Calu3 (cell line): ENCODE measurements at regions of chr5 and their contacts with region 1.

Region 1: DNA sequence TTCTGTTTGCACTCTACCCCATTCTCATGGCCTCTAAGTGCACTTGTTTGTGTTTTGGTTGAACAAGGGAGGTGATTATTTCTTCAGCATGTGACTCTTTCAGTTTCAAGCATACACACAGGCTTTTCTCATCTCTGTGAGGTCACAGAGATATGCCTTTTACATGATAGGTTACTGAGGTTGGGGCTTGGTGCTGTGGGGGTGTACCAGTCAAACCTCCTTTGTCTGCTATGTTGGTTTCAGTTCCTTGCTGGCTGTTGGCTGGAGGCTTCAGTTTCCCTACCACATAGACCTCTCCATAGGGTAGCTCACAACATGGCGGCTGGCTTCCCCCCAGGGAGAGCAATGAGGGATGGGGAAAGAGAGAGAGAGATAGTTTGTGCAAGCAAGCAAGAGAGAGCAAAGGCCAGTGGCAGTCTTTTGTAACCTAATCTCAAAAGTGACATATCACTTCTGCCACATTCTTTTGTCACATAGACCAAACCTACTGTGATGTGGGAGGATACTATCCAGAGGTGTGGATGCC is 96.7 kb upstream of the SEMA6A start:
- DNase-seq: no peak
- H3K4me3 Mint-ChIP-seq: peak overlapping the region; percentile 39
- H3K27ac Mint-ChIP-seq: peak overlapping the region; percentile 95
- H3K4me1 Mint-ChIP-seq: peaks cover 93% of the 10 kb centered on the region
- H3K27me3 Mint-ChIP-seq: no peaks in the 10 kb centered on the region
- CTCF ChIP-seq: no peak

Region 2: DNA sequence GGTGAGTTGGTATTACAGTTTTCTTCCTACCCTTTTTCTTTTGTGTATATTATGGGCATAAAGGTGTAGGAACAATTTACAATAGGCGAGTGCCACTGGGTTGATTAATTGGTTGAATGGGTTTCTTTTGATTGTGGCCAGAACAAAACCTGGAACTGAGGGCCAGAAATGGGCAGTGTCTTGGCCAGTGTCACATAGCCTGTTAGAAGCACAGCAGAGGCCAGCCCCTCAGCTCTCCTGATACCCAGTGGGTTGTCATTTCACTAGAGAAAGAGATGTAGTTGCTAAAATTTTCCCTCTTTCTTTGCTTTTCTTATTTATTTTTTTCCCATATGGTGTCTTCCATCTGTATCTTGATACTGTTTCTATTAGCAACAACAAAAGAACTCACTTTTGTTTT is 57.8 kb before region 1 on chr5:
- CTCF ChIA-PET with region 1: interaction called, 4 read pairs
- intact Hi-C with region 1: loop called (anchors 2 kb)
- DNase-seq: no peak
- H3K4me3 Mint-ChIP-seq: peak overlapping the region; percentile 52
- H3K27ac Mint-ChIP-seq: peak overlapping the region; percentile 96
- H3K4me1 Mint-ChIP-seq: peaks cover 42% of the 10 kb centered on the region
- H3K27me3 Mint-ChIP-seq: no peaks in the 10 kb centered on the region
- CTCF ChIP-seq: no peak

Region 3: DNA sequence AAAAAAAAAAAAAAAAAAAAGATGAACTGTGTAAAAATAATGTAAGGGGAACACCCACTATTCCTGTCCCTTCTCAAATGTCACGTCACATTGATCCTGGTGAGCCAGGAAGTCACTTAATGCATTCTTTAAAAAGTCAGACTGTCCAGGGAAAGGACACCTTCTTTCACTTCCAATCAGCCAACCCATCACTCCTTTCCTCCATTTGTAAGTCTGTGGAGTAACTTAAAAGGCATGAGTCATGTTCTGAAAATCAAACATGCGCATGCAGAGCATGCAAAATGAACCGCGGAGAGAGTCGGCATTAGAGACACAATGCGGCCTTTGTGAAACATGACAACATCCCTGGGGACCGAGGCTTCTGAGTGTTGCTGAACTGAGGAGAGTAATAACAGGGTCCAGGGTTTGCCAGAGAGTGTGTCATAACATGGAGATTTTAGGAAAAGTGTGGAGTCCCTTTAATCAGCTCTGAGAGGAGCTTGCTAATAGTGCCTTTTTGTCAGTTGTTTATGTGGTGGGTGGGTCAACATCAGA is 19.0 kb before region 1 on chr5:
- CTCF ChIA-PET with region 1: interaction called, 5 read pairs
- intact Hi-C with region 1: loop called (anchors 2 kb)
- DNase-seq: peak; percentile 79
- H3K4me3 Mint-ChIP-seq: peak overlapping the region; percentile 46
- H3K27ac Mint-ChIP-seq: peak overlapping the region; percentile 73
- H3K4me1 Mint-ChIP-seq: peaks cover 22% of the 10 kb centered on the region
- H3K27me3 Mint-ChIP-seq: no peaks in the 10 kb centered on the region
- CTCF ChIP-seq: no peak

Region 4: DNA sequence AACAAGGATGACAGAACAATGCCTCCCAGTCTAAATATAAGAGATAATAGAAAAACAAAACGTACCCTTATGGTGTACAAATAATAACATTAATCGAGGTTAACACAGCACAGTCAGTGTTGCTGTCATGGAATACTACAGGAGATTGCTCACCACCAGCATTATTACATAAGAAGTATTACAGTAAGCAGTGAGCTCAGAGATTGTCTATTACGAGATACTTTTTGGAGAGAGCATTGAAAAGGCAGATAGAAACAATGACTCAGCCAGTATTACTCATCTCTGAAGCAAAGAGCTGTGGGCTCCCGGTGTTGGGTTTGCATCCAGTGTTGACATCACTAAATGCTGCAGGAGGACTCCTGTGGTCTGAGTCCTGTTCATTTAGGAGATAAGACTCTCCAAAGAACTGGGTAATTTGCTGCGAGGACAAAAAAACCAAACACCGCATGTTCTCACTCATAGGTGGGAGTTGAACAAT is 95.2 kb after region 1 on chr5:
- CTCF ChIA-PET with region 1: interaction called, 4 read pairs
- intact Hi-C with region 1: loop called (anchors 2 kb)
- DNase-seq: peak; percentile 62
- H3K4me3 Mint-ChIP-seq: peak overlapping the region; percentile 35
- H3K27ac Mint-ChIP-seq: peak overlapping the region; percentile 79
- H3K4me1 Mint-ChIP-seq: peaks cover 34% of the 10 kb centered on the region
- H3K27me3 Mint-ChIP-seq: no peaks in the 10 kb centered on the region
- CTCF ChIP-seq: no peak

Region 5: DNA sequence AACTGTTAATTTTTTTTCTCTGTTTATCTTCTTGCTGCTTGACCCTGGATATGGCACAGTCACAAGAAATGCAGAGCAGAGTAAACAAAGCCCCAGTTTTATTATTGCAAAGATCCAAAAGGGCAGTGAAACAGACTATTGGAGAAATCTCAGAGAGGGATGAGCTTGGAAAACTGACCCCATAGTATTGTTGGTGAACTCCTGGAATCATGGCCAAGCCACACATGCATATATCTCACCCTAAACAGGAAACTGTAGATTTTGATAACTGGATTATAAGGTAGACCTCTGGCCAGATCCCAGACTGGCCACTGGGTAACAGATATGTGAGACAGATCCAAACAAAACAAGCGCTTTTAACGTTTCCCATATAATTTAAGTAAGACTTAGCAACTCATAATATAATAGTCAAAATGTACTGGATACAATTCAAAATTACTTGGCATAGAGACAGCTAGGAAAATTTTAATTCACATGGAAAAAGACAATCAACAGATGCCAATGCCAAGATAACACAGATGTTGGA is 166.8 kb after region 1 on chr5:
- CTCF ChIA-PET with region 1: no interaction called
- intact Hi-C with region 1: no loop called
- DNase-seq: no peak
- H3K4me3 Mint-ChIP-seq: no peak overlapping the region
- H3K27ac Mint-ChIP-seq: no peak overlapping the region
- H3K4me1 Mint-ChIP-seq: no peaks in the 10 kb centered on the region
- H3K27me3 Mint-ChIP-seq: no peaks in the 10 kb centered on the region
- CTCF ChIP-seq: no peak

Region 6: DNA sequence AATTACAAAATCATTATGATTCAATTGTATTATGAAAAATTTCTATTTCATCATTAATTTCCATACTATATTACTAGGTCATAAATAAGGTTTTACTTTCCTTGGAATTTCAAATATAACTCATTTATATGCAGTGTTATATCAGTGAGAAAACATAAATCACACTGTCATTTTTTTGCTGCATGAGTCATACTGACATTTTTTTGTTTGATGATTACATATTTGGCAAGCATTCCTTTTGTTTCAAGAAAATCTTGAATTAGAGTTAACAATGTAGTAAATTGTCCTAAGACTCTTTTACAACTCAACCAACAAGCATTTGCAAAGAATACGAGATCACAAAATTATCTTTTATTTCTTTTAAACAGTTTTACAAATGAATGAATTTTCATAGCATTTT is 201.7 kb after region 1 on chr5:
- CTCF ChIA-PET with region 1: no interaction called
- intact Hi-C with region 1: loop called (anchors 5 kb)
- DNase-seq: no peak
- H3K4me3 Mint-ChIP-seq: no peak overlapping the region
- H3K27ac Mint-ChIP-seq: no peak overlapping the region
- H3K4me1 Mint-ChIP-seq: peaks cover 28% of the 10 kb centered on the region
- H3K27me3 Mint-ChIP-seq: no peaks in the 10 kb centered on the region
- CTCF ChIP-seq: no peak

Region 7: GRCh38 chr5:116947691-116948528 is 276.6 kb after region 1 on chr5:
- CTCF ChIA-PET with region 1: no interaction called
- intact Hi-C with region 1: loop called (anchors 5 kb)
- DNase-seq: peak; percentile 87
- H3K4me3 Mint-ChIP-seq: no peak overlapping the region
- H3K27ac Mint-ChIP-seq: no peak overlapping the region
- H3K4me1 Mint-ChIP-seq: peaks cover 18% of the 10 kb centered on the region
- H3K27me3 Mint-ChIP-seq: no peaks in the 10 kb centered on the region
- CTCF ChIP-seq: peak; percentile 83